ENCODE measurements at regions of chr3 and their contacts with region 1.

Region 1: DNA sequence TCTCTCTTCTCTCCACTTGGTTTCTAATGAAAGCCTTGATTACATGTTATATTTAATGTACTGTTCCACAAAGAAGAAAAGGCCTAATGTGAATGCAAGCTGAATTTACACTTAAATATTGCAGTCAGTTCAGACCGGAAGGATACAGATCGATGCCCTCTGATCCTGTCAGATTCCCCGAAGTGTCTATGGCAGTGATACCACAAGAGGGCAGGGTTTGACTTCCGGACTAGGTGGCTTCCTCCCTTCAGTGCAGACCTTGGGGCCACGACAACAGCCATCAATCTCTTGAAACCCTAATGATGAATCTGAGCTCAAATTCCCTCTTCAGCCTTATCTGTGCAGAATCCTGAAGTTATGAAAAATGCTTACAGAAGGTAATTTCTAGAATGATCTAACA is 29.5 kb downstream of the AGTR1 start:
- DNase-seq: peak in 1 of 2 experiments; percentile 53
- H3K4me3 ChIP-seq: no peak overlapping the region
- H3K27ac ChIP-seq: no peak overlapping the region
- H3K4me1 ChIP-seq: no peaks in the 10 kb centered on the region
- H3K27me3 ChIP-seq: no peaks in the 10 kb centered on the region
- CTCF ChIP-seq: peak; percentile 75 to 83 (median 82)
- EP300 ChIP-seq: no peak
- POLR2A ChIP-seq: no peak
- RAD21 ChIP-seq: peak; percentile 91 to 92

Region 2: GRCh38 chr3:148379763-148380382 is 347.4 kb before region 1 on chr3:
- CTCF ChIA-PET with region 1: interaction called, 11 read pairs
- POLR2A ChIA-PET with region 1: no interaction called
- DNase-seq: no peak
- H3K4me3 ChIP-seq: no peak overlapping the region
- H3K27ac ChIP-seq: no peak overlapping the region
- H3K4me1 ChIP-seq: no peaks in the 10 kb centered on the region
- H3K27me3 ChIP-seq: no peaks in the 10 kb centered on the region
- CTCF ChIP-seq: peak in 2 of 3 experiments; percentile 66 to 74; a peak in 3 of 4 replicates
- EP300 ChIP-seq: no peak
- POLR2A ChIP-seq: no peak
- RAD21 ChIP-seq: peak; percentile 93 to 94

Region 3: DNA sequence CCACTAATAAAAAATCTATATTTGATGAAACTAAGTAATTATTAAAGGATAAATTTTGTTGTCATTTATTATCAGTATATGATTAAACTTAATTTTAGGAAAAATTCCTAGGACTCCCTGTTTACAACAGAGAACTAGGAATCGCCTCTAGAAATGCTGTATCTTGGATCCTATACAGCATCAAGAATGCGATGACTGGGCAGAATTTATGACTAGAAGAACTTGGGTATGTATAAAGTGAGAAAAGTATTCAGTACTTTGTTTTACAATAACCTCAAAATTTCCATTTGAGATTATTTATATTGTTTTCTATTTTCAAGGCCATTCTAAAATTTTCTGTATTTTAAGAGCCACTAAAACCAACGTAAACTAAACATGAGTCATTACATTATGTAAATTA is 111.9 kb before region 1 on chr3:
- CTCF ChIA-PET with region 1: no interaction called
- POLR2A ChIA-PET with region 1: no interaction called
- DNase-seq: no peak
- H3K4me3 ChIP-seq: no peak overlapping the region
- H3K27ac ChIP-seq: no peak overlapping the region
- H3K4me1 ChIP-seq: no peaks in the 10 kb centered on the region
- H3K27me3 ChIP-seq: peaks cover 0 to 1% (median 0%) of the 10 kb centered on the region in 4 experiments; a peak in 1 of 7 replicates
- CTCF ChIP-seq: no peak
- EP300 ChIP-seq: no peak
- POLR2A ChIP-seq: no peak
- RAD21 ChIP-seq: no peak

Region 4: GRCh38 chr3:148813972-148814371 is 86.7 kb after region 1 on chr3:
- CTCF ChIA-PET with region 1: no interaction called
- POLR2A ChIA-PET with region 1: no interaction called
- DNase-seq: no peak
- H3K4me3 ChIP-seq: no peak overlapping the region
- H3K27ac ChIP-seq: no peak overlapping the region
- H3K4me1 ChIP-seq: no peaks in the 10 kb centered on the region
- H3K27me3 ChIP-seq: no peaks in the 10 kb centered on the region; a peak in 1 of 7 replicates
- CTCF ChIP-seq: no peak
- EP300 ChIP-seq: no peak
- POLR2A ChIP-seq: no peak
- RAD21 ChIP-seq: no peak

Region 5: GRCh38 chr3:148873270-148873926 is 146.2 kb after region 1 on chr3:
- CTCF ChIA-PET with region 1: interaction called, 41 read pairs
- POLR2A ChIA-PET with region 1: no interaction called
- DNase-seq: no peak
- H3K4me3 ChIP-seq: no peak overlapping the region
- H3K27ac ChIP-seq: no peak overlapping the region
- H3K4me1 ChIP-seq: no peaks in the 10 kb centered on the region
- H3K27me3 ChIP-seq: no peaks in the 10 kb centered on the region
- CTCF ChIP-seq: no peak
- EP300 ChIP-seq: no peak
- POLR2A ChIP-seq: no peak
- RAD21 ChIP-seq: no peak

Region 6: DNA sequence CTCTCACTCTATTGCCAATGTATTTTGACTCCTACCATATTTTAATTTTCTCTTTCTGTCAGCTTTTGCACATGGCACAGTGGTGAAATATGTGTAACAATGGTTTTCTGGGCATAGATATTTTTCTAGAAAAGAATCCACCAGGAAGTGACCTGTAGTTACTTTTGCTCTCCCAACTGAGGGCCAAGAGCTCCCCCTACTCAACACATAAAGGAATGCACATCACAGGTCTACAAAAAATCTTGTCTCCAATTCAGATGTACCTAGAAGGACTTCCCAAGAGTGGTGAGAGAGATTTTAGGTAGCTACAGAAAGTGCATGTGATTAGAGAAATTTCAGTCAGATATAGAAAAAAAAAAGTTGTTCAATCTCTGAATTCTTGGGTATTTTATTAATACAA is 153.4 kb after region 1 on chr3:
- CTCF ChIA-PET with region 1: interaction called, 41 read pairs
- POLR2A ChIA-PET with region 1: no interaction called
- DNase-seq: no peak
- H3K4me3 ChIP-seq: no peak overlapping the region
- H3K27ac ChIP-seq: no peak overlapping the region
- H3K4me1 ChIP-seq: no peaks in the 10 kb centered on the region
- H3K27me3 ChIP-seq: no peaks in the 10 kb centered on the region
- CTCF ChIP-seq: peak in 2 of 3 experiments; percentile 55 to 68; a peak in 3 of 4 replicates
- EP300 ChIP-seq: no peak
- POLR2A ChIP-seq: no peak
- RAD21 ChIP-seq: peak; percentile 83 to 85

Region 7: DNA sequence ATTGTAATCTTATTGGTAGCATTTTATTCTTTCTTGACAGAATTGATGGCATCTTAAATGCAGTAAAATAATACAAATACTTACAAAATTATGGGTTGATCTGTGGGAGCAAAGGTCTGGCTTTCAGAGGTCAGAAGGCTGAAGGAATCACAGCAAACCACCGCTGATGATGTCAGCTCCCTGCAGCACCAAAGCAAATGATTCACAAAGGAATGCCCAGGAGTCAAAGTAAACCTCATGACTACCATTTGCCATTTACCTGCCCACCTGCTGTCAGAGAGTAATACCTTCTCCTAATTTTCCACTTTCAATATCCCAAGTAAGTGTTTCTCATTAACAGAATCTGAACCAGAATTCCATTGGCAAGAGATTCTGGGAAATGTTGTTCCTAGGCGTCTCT is 183.9 kb after region 1 on chr3:
- CTCF ChIA-PET with region 1: no interaction called
- POLR2A ChIA-PET with region 1: no interaction called
- DNase-seq: no peak
- H3K4me3 ChIP-seq: no peak overlapping the region
- H3K27ac ChIP-seq: no peak overlapping the region
- H3K4me1 ChIP-seq: no peaks in the 10 kb centered on the region
- H3K27me3 ChIP-seq: no peaks in the 10 kb centered on the region
- CTCF ChIP-seq: no peak
- EP300 ChIP-seq: no peak
- POLR2A ChIP-seq: no peak
- RAD21 ChIP-seq: no peak

Region 8: DNA sequence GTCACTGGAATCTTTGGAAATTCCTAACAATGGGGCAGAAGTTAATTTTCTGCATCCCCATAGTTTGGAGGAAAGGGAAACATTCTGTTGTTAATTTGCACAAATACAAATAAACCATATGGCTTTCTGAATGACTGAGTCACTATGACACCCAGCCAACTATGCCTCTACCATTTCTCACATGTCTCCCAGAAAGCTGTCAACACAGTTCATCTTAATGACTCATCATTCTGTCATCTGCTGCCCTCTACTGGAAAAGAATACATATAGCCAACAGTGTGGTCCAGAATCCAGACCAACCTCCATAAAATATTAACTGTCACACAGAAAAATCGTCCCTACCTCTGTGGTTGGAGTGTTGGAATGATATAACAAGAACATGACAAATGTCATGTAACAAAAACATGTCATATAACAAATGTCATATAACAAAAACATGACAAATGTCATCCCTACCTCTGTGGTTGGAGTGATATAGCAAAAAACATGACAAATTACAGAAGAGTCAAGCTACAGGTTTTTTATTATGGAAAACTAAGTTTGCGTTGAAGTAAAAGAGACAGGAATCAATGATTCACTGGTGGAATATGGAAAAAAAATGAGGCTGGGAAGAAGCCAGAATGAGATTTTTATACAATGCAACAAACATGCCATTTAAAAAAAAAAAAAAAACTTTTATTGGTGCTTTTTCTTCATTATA is 216.4 kb after region 1 on chr3:
- CTCF ChIA-PET with region 1: interaction called, 19 read pairs
- POLR2A ChIA-PET with region 1: no interaction called
- DNase-seq: no peak
- H3K4me3 ChIP-seq: no peak overlapping the region
- H3K27ac ChIP-seq: no peak overlapping the region
- H3K4me1 ChIP-seq: no peaks in the 10 kb centered on the region
- H3K27me3 ChIP-seq: no peaks in the 10 kb centered on the region
- CTCF ChIP-seq: peak in 2 of 3 experiments; percentile 57 to 59; a peak in 3 of 4 replicates
- EP300 ChIP-seq: no peak
- POLR2A ChIP-seq: no peak
- RAD21 ChIP-seq: peak; percentile 87 to 89

Measured in H1 (cell line).